ENCODE measurements at regions of chr12 and their contacts with region 1.

Region 1: DNA sequence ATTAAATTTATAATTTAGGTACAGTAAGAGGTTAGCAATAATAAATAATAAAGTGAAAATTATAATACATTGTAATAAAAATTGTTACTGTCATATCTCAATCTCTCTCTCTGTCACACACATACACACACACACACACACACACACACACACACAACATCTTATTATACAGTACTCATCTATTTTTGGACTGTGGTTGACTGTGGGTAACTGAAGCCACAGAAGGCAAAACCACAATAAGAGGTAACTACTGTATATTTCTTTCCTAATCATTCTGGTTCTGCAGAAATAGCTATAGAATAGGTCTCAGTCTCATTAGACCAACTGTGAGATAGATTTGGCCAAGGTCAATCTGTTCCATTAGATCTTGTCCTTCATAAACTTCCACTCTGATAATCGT is 33.1 kb upstream of the PTPRO start:
- DNase-seq: no peak
- H3K4me3 ChIP-seq: no peak overlapping the region
- H3K27ac ChIP-seq: no peak overlapping the region
- H3K4me1 ChIP-seq: no peaks in the 10 kb centered on the region
- H3K27me3 ChIP-seq: no peaks in the 10 kb centered on the region
- CTCF ChIP-seq: no peak
- POLR2A ChIP-seq: no peak

Region 2: GRCh38 chr12:15563663-15564062 is 274.5 kb after region 1 on chr12:
- intact Hi-C with region 1: loop called in 1 of 2 experiments (anchors 5 kb)
- DNase-seq: peak in 1 of 7 donors; percentile 18
- H3K4me3 ChIP-seq: peak overlapping the region in 1 of 4 donors; percentile 29
- H3K27ac ChIP-seq: peak overlapping the region in 3 of 5 donors; percentile 30 to 69 (median 53)
- H3K4me1 ChIP-seq: no peaks in the 10 kb centered on the region
- H3K27me3 ChIP-seq: no peaks in the 10 kb centered on the region
- CTCF ChIP-seq: no peak
- POLR2A ChIP-seq: no peak

Region 3: GRCh38 chr12:15662303-15662980 is 373.2 kb after region 1 on chr12:
- intact Hi-C with region 1: no loop called
- DNase-seq: no peak
- H3K4me3 ChIP-seq: no peak overlapping the region
- H3K27ac ChIP-seq: no peak overlapping the region
- H3K4me1 ChIP-seq: no peaks in the 10 kb centered on the region
- H3K27me3 ChIP-seq: no peaks in the 10 kb centered on the region
- CTCF ChIP-seq: no peak
- POLR2A ChIP-seq: no peak